ENCODE measurements at regions of chr2 and their contacts with region 1.

Region 1: DNA sequence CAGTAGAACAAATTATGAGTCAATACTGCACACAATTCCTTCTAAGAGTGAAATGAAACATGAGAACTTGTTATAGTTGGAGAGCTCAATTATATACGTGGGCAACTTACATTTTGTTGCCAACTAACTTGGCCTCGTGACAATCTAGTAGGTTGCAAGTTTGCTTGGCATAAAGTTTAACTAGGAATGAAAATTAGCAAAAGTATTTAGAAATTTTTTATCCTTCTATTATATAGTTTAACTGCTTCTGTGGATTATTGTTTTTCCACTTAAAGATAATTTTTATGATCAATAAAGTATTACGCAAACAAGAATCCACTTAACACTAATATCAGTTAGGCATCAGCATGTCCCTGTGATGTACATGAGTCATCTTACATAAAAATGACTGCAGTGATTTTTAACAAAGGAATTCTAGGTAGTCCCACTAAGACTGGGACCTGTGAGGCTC is 41.1 kb downstream of the FAM124B start:
- DNase-seq: no peak
- H3K4me3 ChIP-seq: no peak overlapping the region
- H3K27ac ChIP-seq: no peak overlapping the region
- H3K4me1 ChIP-seq: no peaks in the 10 kb centered on the region
- H3K27me3 ChIP-seq: no peaks in the 10 kb centered on the region
- CTCF ChIP-seq: no peak
- POLR2A ChIP-seq: no peak

Region 2: GRCh38 chr2:224479826-224480225 is 119.0 kb after region 1 on chr2:
- intact Hi-C with region 1: no loop called
- DNase-seq: no peak
- H3K4me3 ChIP-seq: no peak overlapping the region
- H3K27ac ChIP-seq: no peak overlapping the region
- H3K4me1 ChIP-seq: no peaks in the 10 kb centered on the region
- H3K27me3 ChIP-seq: no peaks in the 10 kb centered on the region
- CTCF ChIP-seq: no peak
- POLR2A ChIP-seq: no peak

Region 3: DNA sequence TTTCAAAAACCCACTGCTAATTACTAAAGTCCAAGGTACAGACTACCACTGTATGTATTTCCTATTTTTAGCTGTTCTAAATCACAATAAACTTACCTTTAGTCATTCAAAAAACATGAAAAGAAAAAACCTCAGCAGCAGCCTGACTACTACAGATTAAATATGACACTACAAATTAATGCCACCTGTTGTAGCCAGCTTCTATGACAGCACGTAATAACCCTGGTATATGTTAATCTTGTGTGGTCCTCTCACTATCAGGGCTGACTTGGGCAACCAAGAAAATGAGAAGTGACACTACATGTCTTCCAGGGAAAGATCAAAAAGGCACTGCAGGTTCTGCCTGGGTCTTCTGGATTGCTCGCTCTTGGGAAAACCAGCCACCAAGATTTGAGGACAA is 131.7 kb after region 1 on chr2:
- intact Hi-C with region 1: no loop called
- DNase-seq: no peak
- H3K4me3 ChIP-seq: no peak overlapping the region
- H3K27ac ChIP-seq: no peak overlapping the region
- H3K4me1 ChIP-seq: no peaks in the 10 kb centered on the region
- H3K27me3 ChIP-seq: no peaks in the 10 kb centered on the region
- CTCF ChIP-seq: no peak
- POLR2A ChIP-seq: no peak

Region 4: GRCh38 chr2:224650815-224651439 is 290.1 kb after region 1 on chr2:
- intact Hi-C with region 1: loop called (anchors 5 kb)
- DNase-seq: no peak
- H3K4me3 ChIP-seq: no peak overlapping the region
- H3K27ac ChIP-seq: no peak overlapping the region
- H3K4me1 ChIP-seq: no peaks in the 10 kb centered on the region
- H3K27me3 ChIP-seq: no peaks in the 10 kb centered on the region
- CTCF ChIP-seq: peak; percentile 72 to 78 (median 74)
- POLR2A ChIP-seq: no peak